GM23248 (cell line): ENCODE measurements at regions of chr12 and their contacts with region 1.

Region 1: DNA sequence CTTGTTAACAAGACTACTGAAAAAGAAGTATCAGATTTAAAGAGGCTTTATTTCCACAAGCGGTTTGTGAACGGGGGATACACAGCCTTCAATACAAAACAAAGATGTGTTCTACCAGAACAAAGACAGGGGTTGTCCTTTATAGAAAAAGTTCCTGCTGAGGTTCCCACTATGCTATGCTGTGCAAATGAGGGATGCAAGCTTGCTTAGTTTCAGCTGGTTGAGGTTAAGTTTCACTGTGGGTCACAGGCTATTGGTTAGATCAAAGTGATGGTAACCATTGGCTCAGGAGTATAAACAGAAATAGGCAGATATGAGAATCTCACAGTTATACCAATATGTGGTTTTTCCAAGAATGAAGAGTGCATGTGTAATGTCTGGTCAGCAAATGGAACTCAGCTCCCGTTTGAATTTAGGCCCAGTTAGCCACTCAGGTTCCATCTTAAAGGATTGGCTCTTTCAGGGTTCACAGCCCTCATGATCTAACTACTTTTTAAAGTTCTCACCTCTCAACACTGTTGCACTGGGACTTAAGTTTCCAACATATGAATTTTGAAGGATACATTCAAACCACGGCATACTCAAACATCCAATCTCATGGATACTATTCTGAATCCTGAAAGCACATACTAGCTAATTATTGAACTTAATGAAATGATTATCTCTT is 215.4 kb upstream of the DCN start:
- DNase-seq: no peak
- H3K4me3 ChIP-seq: no peak overlapping the region
- H3K27ac ChIP-seq: no peak overlapping the region
- H3K4me1 ChIP-seq: no peaks in the 10 kb centered on the region
- H3K27me3 ChIP-seq: no peaks in the 10 kb centered on the region

Region 2: DNA sequence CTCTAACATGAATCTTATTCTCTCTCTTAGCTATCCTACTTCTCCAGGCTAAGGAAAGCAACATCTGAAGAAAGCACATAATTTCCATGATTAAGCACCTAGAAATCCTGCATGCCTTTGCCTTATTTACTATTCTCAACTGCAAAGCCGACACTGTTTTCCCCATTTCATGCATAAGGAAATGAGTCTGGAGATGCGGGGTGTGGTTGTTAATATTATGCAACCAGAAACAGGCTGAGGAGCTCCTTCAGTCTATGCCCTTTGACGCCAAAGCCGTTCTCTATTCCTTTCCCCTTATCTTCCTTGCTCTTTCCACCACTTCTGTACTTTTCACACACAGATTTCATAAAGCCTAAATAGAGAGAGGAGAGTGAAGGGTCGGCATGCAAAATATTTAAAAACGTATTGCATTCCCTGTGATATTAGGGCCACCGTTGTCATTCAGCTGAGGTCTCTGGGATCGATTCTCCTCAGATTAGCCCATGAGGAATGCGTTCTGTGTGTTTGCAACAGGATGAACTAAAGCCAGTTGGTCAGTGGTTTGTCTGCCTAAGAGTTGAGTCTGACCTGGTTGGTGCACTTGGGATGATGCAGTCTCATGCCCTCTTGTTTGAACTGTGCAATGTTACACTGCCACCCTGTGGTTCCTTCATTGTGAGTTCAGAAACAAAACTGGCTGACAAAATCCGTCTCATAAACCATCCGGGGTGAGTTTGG is 1251.7 kb after region 1 on chr12:
- in situ Hi-C with region 1: loop called (anchors 10 kb)
- DNase-seq: peak; percentile 92
- H3K4me3 ChIP-seq: peak overlapping the region; percentile 61
- H3K27ac ChIP-seq: peak overlapping the region; percentile 75
- H3K4me1 ChIP-seq: peaks cover 23% of the 10 kb centered on the region
- H3K27me3 ChIP-seq: no peaks in the 10 kb centered on the region